ENCODE measurements at regions of chr4 and their contacts with region 1.

Region 1: GRCh38 chr4:17810260-17811077 is at the starts of genes DCAF16 and NCAPG:
- DNase-seq: peak; percentile 100
- H3K4me3 ChIP-seq: peak within 1 kb of the TSS; percentile 70 to 89 (median 74)
- H3K27ac ChIP-seq: peak within 1 kb of the TSS; percentile 96 to 99 (median 98)
- H3K4me1 ChIP-seq: peaks cover 16 to 54% (median 41%) of the 10 kb centered on the region in 4 donors
- H3K27me3 ChIP-seq: no peaks in the 10 kb centered on the region
- CTCF ChIP-seq: no peak
- EP300 ChIP-seq: no peak
- POLR2A ChIP-seq: peak; percentile 98
- total RNA-seq, gene DCAF16: 9.0 to 23.3 (median 16.7) TPM
- total RNA-seq, gene NCAPG: 0.48 to 3.2 (median 0.96) TPM in 3 of 4 donors, not detected in the other

Region 2: GRCh38 chr4:17092736-17093437 is 717.6 kb before region 1 on chr4:
- in situ Hi-C with region 1: no loop called
- intact Hi-C with region 1: no loop called
- DNase-seq: no peak
- H3K4me3 ChIP-seq: no peak overlapping the region
- H3K27ac ChIP-seq: no peak overlapping the region
- H3K4me1 ChIP-seq: no peaks in the 10 kb centered on the region
- H3K27me3 ChIP-seq: no peaks in the 10 kb centered on the region
- CTCF ChIP-seq: no peak
- EP300 ChIP-seq: no peak
- POLR2A ChIP-seq: no peak

Region 3: GRCh38 chr4:17544205-17544604 is 266.3 kb before region 1 on chr4:
- in situ Hi-C with region 1: loop called in 1 of 4 experiments (anchors 10 kb)
- intact Hi-C with region 1: no loop called
- DNase-seq: peak; percentile 17
- H3K4me3 ChIP-seq: no peak overlapping the region
- H3K27ac ChIP-seq: no peak overlapping the region
- H3K4me1 ChIP-seq: peaks cover 0 to 4% (median 0%) of the 10 kb centered on the region in 4 donors
- H3K27me3 ChIP-seq: no peaks in the 10 kb centered on the region
- CTCF ChIP-seq: no peak
- EP300 ChIP-seq: no peak
- POLR2A ChIP-seq: no peak

Region 4: GRCh38 chr4:17552427-17552826 is 258.0 kb before region 1 on chr4:
- in situ Hi-C with region 1: loop called in 2 of 4 experiments (anchors 10 kb)
- intact Hi-C with region 1: no loop called
- DNase-seq: no peak
- H3K4me3 ChIP-seq: no peak overlapping the region
- H3K27ac ChIP-seq: no peak overlapping the region
- H3K4me1 ChIP-seq: no peaks in the 10 kb centered on the region
- H3K27me3 ChIP-seq: no peaks in the 10 kb centered on the region
- CTCF ChIP-seq: no peak
- EP300 ChIP-seq: no peak
- POLR2A ChIP-seq: no peak

Region 5: GRCh38 chr4:17576932-17577665 is 233.4 kb before region 1 on chr4 and contains the start of gene LAP3:
- in situ Hi-C with region 1: loop called in 1 of 4 experiments (anchors 25 kb)
- intact Hi-C with region 1: no loop called
- DNase-seq: peak; percentile 99
- H3K4me3 ChIP-seq: peak within 1 kb of the TSS; percentile 69 to 87 (median 82)
- H3K27ac ChIP-seq: peak within 1 kb of the TSS; percentile 92 to 98 (median 97)
- H3K4me1 ChIP-seq: peaks cover 0 to 36% (median 20%) of the 10 kb centered on the region in 4 donors
- H3K27me3 ChIP-seq: no peaks in the 10 kb centered on the region
- CTCF ChIP-seq: peak in 1 of 5 experiments; percentile 21
- EP300 ChIP-seq: no peak
- POLR2A ChIP-seq: peak; percentile 98
- total RNA-seq, gene LAP3: 53.5 to 85.0 (median 56.0) TPM

Region 6: DNA sequence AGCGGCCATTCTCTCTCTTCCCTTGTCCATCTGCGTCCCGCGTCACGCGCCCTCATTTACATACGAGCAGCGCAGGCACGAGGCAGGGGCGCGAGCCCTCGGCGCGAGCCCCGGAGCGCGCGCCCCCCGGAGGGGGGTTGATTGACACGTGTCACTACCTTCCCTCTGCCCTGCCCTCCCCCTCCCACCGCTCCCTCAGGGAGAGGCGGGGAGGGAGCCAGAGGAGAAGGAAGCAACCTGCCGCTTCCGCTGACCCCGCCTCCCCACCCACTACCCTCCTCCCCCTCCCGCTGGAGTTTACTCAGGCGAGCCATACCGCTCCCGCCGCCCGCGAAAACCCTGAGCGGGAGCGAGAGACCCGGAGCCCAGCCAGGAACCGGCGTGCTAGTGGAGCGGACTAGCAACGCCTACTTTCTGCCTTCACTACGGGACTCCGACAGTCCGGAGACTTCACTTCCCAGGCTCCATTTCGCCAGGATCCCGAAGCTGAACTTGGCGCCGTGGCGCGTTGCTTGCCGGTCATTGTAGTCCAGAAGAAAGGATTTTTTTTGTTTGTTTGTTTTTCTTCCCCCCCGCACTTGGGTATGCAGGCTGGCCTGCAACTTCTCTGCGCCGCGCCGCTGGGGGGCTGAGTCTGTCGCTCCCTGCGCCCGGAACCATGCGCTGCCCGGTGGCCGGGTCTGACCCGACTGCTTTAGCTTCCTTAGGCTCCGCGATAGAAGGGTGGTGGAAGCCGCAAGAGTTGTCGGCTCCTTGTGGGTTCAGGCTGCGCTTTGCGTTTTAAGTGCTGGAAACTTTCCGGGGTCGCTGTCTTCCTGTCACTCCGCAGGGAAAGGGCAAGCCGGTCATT is 211.5 kb after region 1 on chr4 and contains the start of gene LCORL:
- in situ Hi-C with region 1: loop called in 1 of 4 experiments (anchors 5 kb)
- intact Hi-C with region 1: no loop called
- DNase-seq: peak; percentile 93
- H3K4me3 ChIP-seq: peak within 1 kb of the TSS; percentile 83 to 92 (median 87)
- H3K27ac ChIP-seq: peak within 1 kb of the TSS; percentile 94 to 98 (median 96)
- H3K4me1 ChIP-seq: peaks cover 8 to 21% (median 10%) of the 10 kb centered on the region in 4 donors
- H3K27me3 ChIP-seq: no peaks in the 10 kb centered on the region
- CTCF ChIP-seq: peak in 4 of 5 experiments; percentile 3 to 41 (median 18)
- EP300 ChIP-seq: no peak
- POLR2A ChIP-seq: no peak
- total RNA-seq, gene LCORL: 14.7 to 162 (median 28.5) TPM

Region 7: DNA sequence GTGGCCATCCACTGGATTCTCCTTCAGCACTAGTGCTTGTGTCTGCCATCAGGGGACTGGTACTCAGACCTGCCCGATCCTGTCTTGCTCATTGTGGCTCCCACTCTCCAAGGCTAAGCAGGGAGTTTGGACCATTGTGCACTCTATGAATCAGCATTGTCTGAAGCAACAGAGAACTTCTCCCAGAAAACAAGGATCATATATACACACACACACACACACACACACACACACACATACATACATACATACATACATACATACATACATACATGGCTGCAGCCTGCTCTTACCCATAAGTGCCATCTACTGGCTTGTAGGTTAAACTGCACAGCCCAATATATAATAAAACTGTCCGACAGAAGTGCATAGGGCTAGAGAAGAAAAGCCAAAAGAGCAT is 556.4 kb after region 1 on chr4:
- in situ Hi-C with region 1: loop called in 1 of 4 experiments (anchors 25 kb)
- intact Hi-C with region 1: no loop called
- DNase-seq: no peak
- H3K4me3 ChIP-seq: no peak overlapping the region
- H3K27ac ChIP-seq: no peak overlapping the region
- H3K4me1 ChIP-seq: no peaks in the 10 kb centered on the region
- H3K27me3 ChIP-seq: no peaks in the 10 kb centered on the region
- CTCF ChIP-seq: peak; percentile 29 to 75 (median 52)
- EP300 ChIP-seq: no peak
- POLR2A ChIP-seq: no peak

Region 8: GRCh38 chr4:18593445-18594002 is 783.1 kb after region 1 on chr4:
- in situ Hi-C with region 1: loop called in 2 of 4 experiments (anchors 25 kb)
- intact Hi-C with region 1: loop called (anchors 10 kb)
- DNase-seq: peak; percentile 47
- H3K4me3 ChIP-seq: peak overlapping the region in 1 of 4 donors; percentile 5
- H3K27ac ChIP-seq: no peak overlapping the region
- H3K4me1 ChIP-seq: peaks cover 0 to 7% (median 2%) of the 10 kb centered on the region in 4 donors
- H3K27me3 ChIP-seq: no peaks in the 10 kb centered on the region
- CTCF ChIP-seq: peak; percentile 71 to 80 (median 74)
- EP300 ChIP-seq: no peak
- POLR2A ChIP-seq: no peak

Measured in transverse colon (tissue), 4 donors.